CD4-positive, alpha-beta memory T cell (primary cell): ENCODE measurements at regions of chr4 and their contacts with region 1.

Region 1: GRCh38 chr4:110516106-110516922 is 40.4 kb downstream of the ENPEP start:
- DNase-seq: peak; percentile 69 to 75 (median 70)
- H3K4me3 ChIP-seq: peak overlapping the region; percentile 84 to 97
- H3K4me3 Mint-ChIP-seq: peak overlapping the region; percentile 91 to 99 (median 97)
- H3K27ac ChIP-seq: peak overlapping the region; percentile 48
- H3K27ac Mint-ChIP-seq: peak overlapping the region in 6 of 7 donors; percentile 41 to 96 (median 90)
- H3K4me1 ChIP-seq: peaks cover 12% of the 10 kb centered on the region
- H3K4me1 Mint-ChIP-seq: peaks cover 10 to 16% (median 13%) of the 10 kb centered on the region in 4 donors
- H3K27me3 ChIP-seq: no peaks in the 10 kb centered on the region
- H3K27me3 Mint-ChIP-seq: peaks cover 0 to 5% of the 10 kb centered on the region in 2 donors

Region 2: GRCh38 chr4:109998867-109999584 is 517.3 kb before region 1 on chr4:
- CTCF ChIA-PET with region 1: interaction called, 733 read pairs
- POLR2A ChIA-PET with region 1: no interaction called
- intact Hi-C with region 1: loop called (anchors 1 kb)
- DNase-seq: peak in 4 of 5 donors; percentile 63 to 66 (median 65)
- H3K4me3 ChIP-seq: no peak overlapping the region
- H3K4me3 Mint-ChIP-seq: no peak overlapping the region
- H3K27ac ChIP-seq: no peak overlapping the region
- H3K27ac Mint-ChIP-seq: no peak overlapping the region
- H3K4me1 ChIP-seq: no peaks in the 10 kb centered on the region
- H3K4me1 Mint-ChIP-seq: peaks cover 1 to 8% (median 6%) of the 10 kb centered on the region in 4 donors
- H3K27me3 ChIP-seq: no peaks in the 10 kb centered on the region
- H3K27me3 Mint-ChIP-seq: peaks cover 9 to 11% of the 10 kb centered on the region in 2 donors

Region 3: DNA sequence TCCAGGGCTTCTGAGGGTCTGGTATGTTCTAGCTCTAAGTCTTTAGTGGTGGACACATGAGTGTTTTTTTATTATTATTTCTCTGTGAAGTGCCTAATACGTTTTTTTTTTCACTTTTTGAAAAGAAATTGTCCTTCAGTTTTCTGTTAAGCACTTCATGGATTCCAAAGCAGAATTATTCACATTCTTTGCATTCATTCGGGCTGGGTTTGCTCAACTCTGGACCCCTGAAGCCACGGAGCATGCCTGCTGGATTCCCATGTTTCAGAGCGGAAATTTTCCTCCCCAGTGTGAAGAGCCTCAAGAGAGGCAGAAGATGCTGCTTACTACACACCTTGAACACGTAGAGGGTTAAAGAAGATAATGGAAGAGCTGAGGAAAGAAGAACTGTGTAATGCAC is 496.2 kb before region 1 on chr4:
- CTCF ChIA-PET with region 1: interaction called, 19 read pairs
- POLR2A ChIA-PET with region 1: no interaction called
- intact Hi-C with region 1: no loop called
- DNase-seq: no peak
- H3K4me3 ChIP-seq: no peak overlapping the region
- H3K4me3 Mint-ChIP-seq: peak overlapping the region in 1 of 8 donors; percentile 44
- H3K27ac ChIP-seq: no peak overlapping the region
- H3K27ac Mint-ChIP-seq: no peak overlapping the region
- H3K4me1 ChIP-seq: no peaks in the 10 kb centered on the region
- H3K4me1 Mint-ChIP-seq: peaks cover 11 to 19% (median 13%) of the 10 kb centered on the region in 4 donors
- H3K27me3 ChIP-seq: no peaks in the 10 kb centered on the region
- H3K27me3 Mint-ChIP-seq: peaks cover 0 to 1% of the 10 kb centered on the region in 2 donors

Region 4: GRCh38 chr4:110193822-110194761 is 322.2 kb before region 1 on chr4:
- CTCF ChIA-PET with region 1: no interaction called
- POLR2A ChIA-PET with region 1: no interaction called
- intact Hi-C with region 1: loop called (anchors 5 kb)
- DNase-seq: peak; percentile 71 to 87 (median 78)
- H3K4me3 ChIP-seq: no peak overlapping the region
- H3K4me3 Mint-ChIP-seq: peak overlapping the region in 6 of 8 donors; percentile 12 to 40 (median 31)
- H3K27ac ChIP-seq: peak overlapping the region; percentile 21
- H3K27ac Mint-ChIP-seq: peak overlapping the region; percentile 54 to 91 (median 84)
- H3K4me1 ChIP-seq: peaks cover 27% of the 10 kb centered on the region
- H3K4me1 Mint-ChIP-seq: peaks cover 17 to 43% (median 27%) of the 10 kb centered on the region in 4 donors
- H3K27me3 ChIP-seq: no peaks in the 10 kb centered on the region
- H3K27me3 Mint-ChIP-seq: no peaks in the 10 kb centered on the region

Region 5: GRCh38 chr4:110527156-110527555 is 10.8 kb after region 1 on chr4:
- CTCF ChIA-PET with region 1: interaction called, 59 read pairs
- POLR2A ChIA-PET with region 1: no interaction called
- intact Hi-C with region 1: no loop called
- DNase-seq: peak in 1 of 5 donors; percentile 37
- H3K4me3 ChIP-seq: no peak overlapping the region
- H3K4me3 Mint-ChIP-seq: no peak overlapping the region
- H3K27ac ChIP-seq: no peak overlapping the region
- H3K27ac Mint-ChIP-seq: peak overlapping the region in 1 of 7 donors; percentile 7
- H3K4me1 ChIP-seq: peaks cover 14% of the 10 kb centered on the region
- H3K4me1 Mint-ChIP-seq: peaks cover 11 to 14% (median 13%) of the 10 kb centered on the region in 4 donors
- H3K27me3 ChIP-seq: no peaks in the 10 kb centered on the region
- H3K27me3 Mint-ChIP-seq: peaks cover 0 to 2% of the 10 kb centered on the region in 2 donors